CD4-positive, alpha-beta memory T cell (primary cell): ENCODE measurements at regions of chr1 and their contacts with region 1.

Region 1: GRCh38 chr1:84620720-84621313 is 46.6 kb upstream of the CTBS start:
- DNase-seq: peak; percentile 72 to 90 (median 82)
- H3K4me3 ChIP-seq: peak overlapping the region; percentile 47 to 69
- H3K4me3 Mint-ChIP-seq: peak overlapping the region; percentile 89 to 96 (median 93)
- H3K27ac ChIP-seq: no peak overlapping the region
- H3K27ac Mint-ChIP-seq: peak overlapping the region in 6 of 7 donors; percentile 9 to 94 (median 84)
- H3K4me1 ChIP-seq: peaks cover 5% of the 10 kb centered on the region
- H3K4me1 Mint-ChIP-seq: peaks cover 3 to 19% (median 5%) of the 10 kb centered on the region in 4 donors
- H3K27me3 ChIP-seq: no peaks in the 10 kb centered on the region
- H3K27me3 Mint-ChIP-seq: peaks cover 0 to 6% of the 10 kb centered on the region in 2 donors

Region 2: GRCh38 chr1:84433258-84434080 is 187.3 kb before region 1 on chr1:
- CTCF ChIA-PET with region 1: interaction called, 23 read pairs
- POLR2A ChIA-PET with region 1: no interaction called
- intact Hi-C with region 1: loop called (anchors 2 kb)
- DNase-seq: peak; percentile 67 to 83 (median 81)
- H3K4me3 ChIP-seq: peak overlapping the region in 1 of 2 donors; percentile 20
- H3K4me3 Mint-ChIP-seq: peak overlapping the region; percentile 65 to 82 (median 76)
- H3K27ac ChIP-seq: peak overlapping the region; percentile 54
- H3K27ac Mint-ChIP-seq: peak overlapping the region in 1 of 7 donors; percentile 88
- H3K4me1 ChIP-seq: peaks cover 36% of the 10 kb centered on the region
- H3K4me1 Mint-ChIP-seq: peaks cover 8 to 15% (median 12%) of the 10 kb centered on the region in 4 donors
- H3K27me3 ChIP-seq: no peaks in the 10 kb centered on the region
- H3K27me3 Mint-ChIP-seq: no peaks in the 10 kb centered on the region

Region 3: GRCh38 chr1:84478876-84479868 is 141.6 kb before region 1 on chr1 and contains the start of gene RPF1:
- CTCF ChIA-PET with region 1: interaction called, 10 read pairs
- POLR2A ChIA-PET with region 1: no interaction called
- intact Hi-C with region 1: no loop called
- DNase-seq: peak; percentile 83 to 86 (median 85)
- H3K4me3 ChIP-seq: peak within 1 kb of the TSS; percentile 93
- H3K4me3 Mint-ChIP-seq: peak within 1 kb of the TSS; percentile 96 to 100 (median 99)
- H3K27ac ChIP-seq: peak within 1 kb of the TSS; percentile 65
- H3K27ac Mint-ChIP-seq: peak within 1 kb of the TSS; percentile 96 to 99 (median 98)
- H3K4me1 ChIP-seq: peaks cover 41% of the 10 kb centered on the region
- H3K4me1 Mint-ChIP-seq: peaks cover 31 to 54% (median 41%) of the 10 kb centered on the region in 4 donors
- H3K27me3 ChIP-seq: no peaks in the 10 kb centered on the region
- H3K27me3 Mint-ChIP-seq: peaks cover 13 to 21% of the 10 kb centered on the region in 2 donors
- total RNA-seq, gene RPF1: 41.7 to 46.2 TPM

Region 4: DNA sequence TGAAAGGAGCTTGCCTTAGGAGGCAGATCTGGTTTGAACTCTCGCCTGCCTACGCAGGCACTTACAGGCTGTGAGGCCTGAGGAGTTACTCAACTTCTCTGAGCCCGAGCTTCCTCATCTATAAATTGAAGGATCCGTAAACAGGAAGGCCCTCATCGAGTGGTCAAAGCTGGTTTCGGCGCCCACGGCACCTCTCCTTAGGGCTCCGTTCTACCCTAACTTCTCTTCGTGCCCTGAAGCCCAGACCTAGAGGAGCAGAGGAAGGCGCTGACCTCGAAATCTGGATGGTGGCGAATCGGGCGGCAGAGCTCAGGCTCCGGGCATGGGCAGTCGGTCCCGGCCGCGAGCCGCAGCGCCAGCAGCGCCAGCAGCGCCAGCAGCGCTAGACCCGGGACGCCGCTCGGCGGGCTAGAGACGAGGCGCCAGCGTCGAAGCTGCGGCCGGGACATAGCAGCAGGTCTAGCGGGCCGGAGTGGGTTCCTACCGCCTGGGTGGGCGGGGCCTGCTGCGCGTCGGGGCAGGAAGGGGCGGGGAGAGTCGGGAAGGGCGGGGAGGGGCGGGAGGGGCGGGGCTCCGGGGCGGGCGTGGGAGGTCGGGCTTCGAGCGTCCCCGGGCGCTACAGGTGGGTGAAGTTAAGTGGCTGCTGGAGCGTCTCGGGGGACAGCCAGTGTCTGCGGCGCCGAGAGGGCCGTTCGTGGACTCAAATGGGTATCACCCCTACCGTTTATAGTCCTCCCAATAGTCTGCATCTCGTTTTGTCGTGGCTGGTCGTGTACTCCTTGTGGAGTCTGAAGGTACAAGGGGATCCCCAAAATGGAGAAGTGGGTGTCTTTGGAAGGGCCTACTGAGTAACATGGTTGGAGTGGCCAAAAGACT is 46.6 kb before region 1 on chr1 and contains the start of gene CTBS:
- CTCF ChIA-PET with region 1: interaction called, 4 read pairs
- POLR2A ChIA-PET with region 1: interaction called, 6 read pairs
- intact Hi-C with region 1: loop called (anchors 1 kb)
- DNase-seq: peak; percentile 80 to 84 (median 83)
- H3K4me3 ChIP-seq: peak within 1 kb of the TSS; percentile 78 to 97
- H3K4me3 Mint-ChIP-seq: peak within 1 kb of the TSS; percentile 96 to 99 (median 98)
- H3K27ac ChIP-seq: peak within 1 kb of the TSS; percentile 98
- H3K27ac Mint-ChIP-seq: peak within 1 kb of the TSS; percentile 99 to 100 (median 100)
- H3K4me1 ChIP-seq: peaks cover 37% of the 10 kb centered on the region
- H3K4me1 Mint-ChIP-seq: peaks cover 29 to 46% (median 39%) of the 10 kb centered on the region in 4 donors
- H3K27me3 ChIP-seq: no peaks in the 10 kb centered on the region
- H3K27me3 Mint-ChIP-seq: no peaks in the 10 kb centered on the region
- total RNA-seq, gene CTBS: 17.4 to 18.2 TPM

Region 5: GRCh38 chr1:84772428-84772943 is 151.7 kb after region 1 on chr1:
- CTCF ChIA-PET with region 1: interaction called, 10 read pairs
- POLR2A ChIA-PET with region 1: no interaction called
- intact Hi-C with region 1: no loop called
- DNase-seq: peak; percentile 52 to 66 (median 64)
- H3K4me3 ChIP-seq: no peak overlapping the region
- H3K4me3 Mint-ChIP-seq: no peak overlapping the region
- H3K27ac ChIP-seq: no peak overlapping the region
- H3K27ac Mint-ChIP-seq: peak overlapping the region in 1 of 7 donors; percentile 15
- H3K4me1 ChIP-seq: no peaks in the 10 kb centered on the region
- H3K4me1 Mint-ChIP-seq: peaks cover 0 to 5% (median under 1%) of the 10 kb centered on the region in 4 donors
- H3K27me3 ChIP-seq: no peaks in the 10 kb centered on the region
- H3K27me3 Mint-ChIP-seq: peaks cover 7 to 10% of the 10 kb centered on the region in 2 donors